BJ (cell line): ENCODE measurements at regions of chr7 and their contacts with region 1.

Region 1: GRCh38 chr7:98745722-98746318 is 124.0 kb downstream of the TMEM130 start:
- DNase-seq: no peak
- H3K4me3 ChIP-seq: no peak overlapping the region
- H3K27me3 ChIP-seq: no peaks in the 10 kb centered on the region; the same call in 1 of the 2 replicates
- CTCF ChIP-seq: peak; percentile 89

Region 2: DNA sequence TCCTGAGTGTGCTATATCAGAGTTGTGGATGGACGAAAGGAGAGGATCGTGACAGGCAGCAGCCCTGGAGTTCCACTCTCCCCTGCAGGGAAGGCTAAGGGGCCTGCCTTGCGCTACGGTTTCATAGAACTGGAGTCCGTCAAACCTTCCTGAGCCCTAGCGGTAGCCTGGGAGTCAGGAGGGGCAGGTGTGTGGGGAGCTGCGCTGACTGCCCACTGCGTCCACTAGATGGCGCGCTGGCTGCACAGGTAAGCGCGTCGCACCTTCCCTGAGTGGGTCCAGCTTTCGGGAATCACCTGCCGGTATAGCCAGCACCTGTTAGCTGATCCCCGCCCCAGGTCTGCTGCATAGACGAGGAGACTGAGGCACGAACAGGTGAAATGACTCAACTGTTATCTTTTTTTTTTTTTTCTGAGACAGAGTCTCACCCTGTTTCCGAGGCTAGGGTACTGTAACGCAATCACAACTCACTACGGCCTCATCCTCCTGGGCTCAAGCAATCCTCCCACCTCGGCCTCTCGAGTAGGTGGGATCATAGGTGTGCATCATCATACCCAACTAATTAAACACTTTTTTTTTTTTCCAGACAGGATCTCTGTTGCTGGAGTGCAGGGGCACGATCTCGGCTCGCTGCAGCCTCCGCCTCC is 324.7 kb before region 1 on chr7:
- CTCF ChIA-PET with region 1: interaction called, 17 read pairs
- POLR2A ChIA-PET with region 1: no interaction called
- DNase-seq: no peak
- H3K4me3 ChIP-seq: no peak overlapping the region
- H3K27me3 ChIP-seq: no peaks in the 10 kb centered on the region
- CTCF ChIP-seq: peak; percentile 93

Region 3: GRCh38 chr7:98760201-98760651 is 14.4 kb after region 1 on chr7:
- CTCF ChIA-PET with region 1: interaction called, 14 read pairs
- POLR2A ChIA-PET with region 1: no interaction called
- DNase-seq: peak; percentile 27
- H3K4me3 ChIP-seq: no peak overlapping the region
- H3K27me3 ChIP-seq: no peaks in the 10 kb centered on the region
- CTCF ChIP-seq: no peak

Region 4: GRCh38 chr7:98902523-98902922 is 156.7 kb after region 1 on chr7:
- CTCF ChIA-PET with region 1: no interaction called
- POLR2A ChIA-PET with region 1: no interaction called
- DNase-seq: no peak
- H3K4me3 ChIP-seq: no peak overlapping the region
- H3K27me3 ChIP-seq: no peaks in the 10 kb centered on the region
- CTCF ChIP-seq: no peak

Region 5: GRCh38 chr7:99472561-99473243 is 726.9 kb after region 1 on chr7 and contains the start of gene ZNF789:
- CTCF ChIA-PET with region 1: no interaction called
- POLR2A ChIA-PET with region 1: no interaction called
- DNase-seq: peak; percentile 67
- H3K4me3 ChIP-seq: peak within 1 kb of the TSS; percentile 75
- H3K27me3 ChIP-seq: no peaks in the 10 kb centered on the region
- CTCF ChIP-seq: 0 out of 2 replicates have a peak, but pooled peaks have one; percentile 7
- polyA plus RNA-seq, gene ZNF789: 8.2 and 11.4 TPM in 2 replicates